ENCODE measurements at regions of chr17 and their contacts with region 1.

Region 1: DNA sequence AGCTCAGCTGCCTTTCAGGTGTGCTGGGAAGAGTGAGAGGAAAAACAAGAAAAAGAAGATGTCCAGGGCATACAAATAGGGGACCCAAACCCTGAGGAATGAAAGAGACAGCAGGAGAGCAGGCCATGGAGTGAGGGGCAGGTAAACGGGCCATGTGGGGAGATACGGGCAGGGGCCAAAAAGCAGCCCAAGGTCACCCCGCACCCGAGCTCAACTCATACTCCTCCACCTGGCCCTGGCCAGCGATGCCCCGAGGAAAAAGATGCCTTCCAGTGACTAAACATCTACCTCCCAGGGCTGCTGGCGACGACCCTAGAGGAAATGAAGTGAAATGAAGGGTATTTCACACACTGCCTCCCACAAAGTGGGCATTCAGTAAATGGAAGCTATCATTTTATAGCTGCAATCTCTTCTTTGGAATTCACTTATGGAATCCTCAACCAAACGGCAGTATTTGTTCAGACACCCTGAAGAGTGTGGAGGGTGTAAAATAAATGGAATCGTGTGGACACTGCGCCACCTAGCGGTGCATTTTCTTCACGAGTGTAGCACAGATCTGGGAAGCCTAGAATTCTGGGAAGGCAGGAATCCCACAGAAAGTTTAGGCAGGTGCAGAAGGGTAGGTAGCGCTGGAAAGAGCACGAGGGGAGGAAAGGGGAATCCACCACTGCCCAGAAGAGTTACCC is 14.9 kb downstream of the ELAC2 start:
- DNase-seq: peak; percentile 81 to 95 (median 86)
- ATAC-seq: peak; percentile 82 to 87
- H3K4me3 ChIP-seq: no peak overlapping the region
- H3K27ac ChIP-seq: no peak overlapping the region
- H3K4me1 ChIP-seq: no peaks in the 10 kb centered on the region
- H3K27me3 ChIP-seq: no peaks in the 10 kb centered on the region

Region 2: GRCh38 chr17:12180644-12181261 is 822.2 kb before region 1 on chr17:
- intact Hi-C with region 1: loop called in 3 of 4 experiments (anchors 10 kb)
- DNase-seq: no peak
- ATAC-seq: peak; percentile 39 to 61
- H3K4me3 ChIP-seq: no peak overlapping the region
- H3K27ac ChIP-seq: no peak overlapping the region
- H3K4me1 ChIP-seq: peaks cover 1% of the 10 kb centered on the region
- H3K27me3 ChIP-seq: no peaks in the 10 kb centered on the region

Region 3: GRCh38 chr17:12256380-12256995 is 746.4 kb before region 1 on chr17:
- intact Hi-C with region 1: loop called in 1 of 4 experiments (anchors 10 kb)
- DNase-seq: peak; percentile 23 to 57 (median 45)
- ATAC-seq: peak; percentile 66 to 70
- H3K4me3 ChIP-seq: no peak overlapping the region
- H3K27ac ChIP-seq: no peak overlapping the region
- H3K4me1 ChIP-seq: no peaks in the 10 kb centered on the region
- H3K27me3 ChIP-seq: no peaks in the 10 kb centered on the region

Region 4: DNA sequence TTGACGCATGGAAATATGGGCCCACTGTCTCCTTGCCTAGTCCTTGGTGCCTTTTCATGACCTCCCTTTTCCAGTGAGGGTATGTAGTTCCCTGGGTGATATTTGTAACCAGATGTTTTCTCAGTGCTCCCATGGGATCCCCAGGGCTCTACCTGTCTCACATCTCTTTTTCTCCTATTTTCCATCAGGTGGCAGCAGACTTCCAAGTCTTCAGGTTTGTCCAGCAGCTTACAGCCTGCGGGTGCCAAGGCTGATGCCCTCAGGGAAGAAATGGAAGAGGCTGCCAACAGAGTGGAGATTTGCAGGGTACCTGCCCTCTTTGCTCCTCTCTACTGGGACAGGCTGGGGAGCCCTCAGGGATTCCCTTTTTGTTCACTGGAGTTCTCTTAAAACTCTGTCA is 74.2 kb before region 1 on chr17:
- intact Hi-C with region 1: loop called in 1 of 4 experiments (anchors 5 kb)
- DNase-seq: no peak
- ATAC-seq: peak in 1 of 2 donors; percentile 43
- H3K4me3 ChIP-seq: no peak overlapping the region
- H3K27ac ChIP-seq: no peak overlapping the region
- H3K4me1 ChIP-seq: no peaks in the 10 kb centered on the region
- H3K27me3 ChIP-seq: no peaks in the 10 kb centered on the region